ENCODE measurements at regions of chr6 and their contacts with region 1.

Region 1: GRCh38 chr6:142207265-142207877 is 60.3 kb downstream of the VTA1 start:
- DNase-seq: peak in 2 of 3 donors; percentile 25 to 35
- ATAC-seq: peak; percentile 69 to 83
- H3K4me3 ChIP-seq: no peak overlapping the region
- H3K27ac ChIP-seq: no peak overlapping the region
- H3K4me1 ChIP-seq: no peaks in the 10 kb centered on the region
- H3K27me3 ChIP-seq: no peaks in the 10 kb centered on the region

Region 2: GRCh38 chr6:142146828-142147662 is 60.3 kb before region 1 on chr6 and contains the starts of genes NMBR and VTA1:
- intact Hi-C with region 1: loop called in 3 of 4 experiments (anchors 5 to 10 kb)
- DNase-seq: peak; percentile 97 to 98 (median 98)
- ATAC-seq: peak; percentile 99 to 100
- H3K4me3 ChIP-seq: peak within 1 kb of the TSS; percentile 90
- H3K27ac ChIP-seq: peak within 1 kb of the TSS; percentile 0
- H3K4me1 ChIP-seq: peaks cover 2% of the 10 kb centered on the region
- H3K27me3 ChIP-seq: no peaks in the 10 kb centered on the region
- total RNA-seq, gene NMBR: not detected
- total RNA-seq, gene VTA1: 29.6 to 35.2 (median 30.7) TPM

Region 3: DNA sequence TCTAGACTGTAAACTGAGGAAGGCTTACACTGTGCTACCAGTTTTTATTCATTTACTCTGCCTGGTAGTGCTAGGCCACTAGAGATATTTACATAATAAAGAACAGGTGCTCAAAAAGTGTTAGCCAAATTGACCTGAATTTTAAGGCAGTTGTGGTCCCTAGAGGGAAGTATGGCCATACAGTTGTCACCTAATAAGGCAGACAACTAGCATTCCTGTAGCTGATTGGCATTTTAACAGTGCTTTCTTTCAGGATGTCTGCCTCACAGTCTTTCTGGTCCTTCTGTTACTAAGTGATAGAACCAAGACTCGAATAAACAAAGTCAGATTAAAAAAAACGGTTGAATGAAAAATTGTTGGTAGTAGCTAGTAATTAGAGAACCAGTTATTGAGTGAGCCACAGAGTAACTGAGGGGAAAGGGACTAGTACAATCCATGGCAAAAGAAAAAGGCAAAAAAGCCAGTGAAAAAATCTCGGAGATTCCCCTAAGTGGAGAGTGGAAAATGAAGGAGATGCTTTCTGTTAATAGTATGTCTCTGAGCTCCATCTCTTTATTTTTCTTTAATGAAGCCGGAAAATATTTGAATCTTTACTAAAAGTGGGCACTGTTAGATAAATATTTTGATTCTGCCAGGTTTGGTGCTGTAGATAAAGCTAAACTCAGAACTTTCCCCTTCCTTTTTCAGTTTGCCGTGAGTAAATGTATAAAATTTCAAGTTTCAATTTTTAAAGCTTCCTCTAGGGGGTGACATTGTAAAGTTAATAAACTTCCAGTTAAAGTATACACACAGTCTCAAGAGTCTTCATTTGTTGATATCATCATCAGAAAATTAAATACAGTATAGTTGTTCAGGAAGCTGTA is 51.2 kb before region 1 on chr6:
- intact Hi-C with region 1: loop called in 2 of 4 experiments (anchors 5 to 10 kb)
- DNase-seq: no peak
- ATAC-seq: peak in 1 of 2 donors; percentile 66
- H3K4me3 ChIP-seq: no peak overlapping the region
- H3K27ac ChIP-seq: no peak overlapping the region
- H3K4me1 ChIP-seq: no peaks in the 10 kb centered on the region
- H3K27me3 ChIP-seq: no peaks in the 10 kb centered on the region